ENCODE measurements at regions of chr17 and their contacts with region 1.

Region 1: GRCh38 chr17:65988081-65988850 is 203.7 kb downstream of the CEP112 start:
- DNase-seq: peak in 1 of 9 donors; percentile 5
- ATAC-seq: no peak
- H3K4me3 ChIP-seq: no peak overlapping the region
- H3K4me3 Mint-ChIP-seq: no peak overlapping the region
- H3K27ac ChIP-seq: no peak overlapping the region
- H3K27ac Mint-ChIP-seq: no peak overlapping the region
- H3K4me1 ChIP-seq: no peaks in the 10 kb centered on the region
- H3K4me1 Mint-ChIP-seq: no peaks in the 10 kb centered on the region
- H3K27me3 ChIP-seq: no peaks in the 10 kb centered on the region
- H3K27me3 Mint-ChIP-seq: peaks cover 0 to 16% (median 0%) of the 10 kb centered on the region in 5 donors

Region 2: GRCh38 chr17:65294179-65294720 is 694.0 kb before region 1 on chr17:
- CTCF ChIA-PET with region 1: no interaction called
- POLR2A ChIA-PET with region 1: no interaction called
- intact Hi-C with region 1: loop called in 1 of 2 experiments (anchors 5 kb)
- DNase-seq: peak; percentile 15 to 70 (median 60)
- ATAC-seq: peak; percentile 86
- H3K4me3 ChIP-seq: no peak overlapping the region
- H3K4me3 Mint-ChIP-seq: no peak overlapping the region
- H3K27ac ChIP-seq: no peak overlapping the region
- H3K27ac Mint-ChIP-seq: peak overlapping the region in 1 of 9 donors; percentile 80
- H3K4me1 ChIP-seq: no peaks in the 10 kb centered on the region
- H3K4me1 Mint-ChIP-seq: peaks cover 0 to 5% (median 5%) of the 10 kb centered on the region in 7 donors
- H3K27me3 ChIP-seq: no peaks in the 10 kb centered on the region
- H3K27me3 Mint-ChIP-seq: peaks cover 0 to 18% (median 0%) of the 10 kb centered on the region in 5 donors

Region 3: DNA sequence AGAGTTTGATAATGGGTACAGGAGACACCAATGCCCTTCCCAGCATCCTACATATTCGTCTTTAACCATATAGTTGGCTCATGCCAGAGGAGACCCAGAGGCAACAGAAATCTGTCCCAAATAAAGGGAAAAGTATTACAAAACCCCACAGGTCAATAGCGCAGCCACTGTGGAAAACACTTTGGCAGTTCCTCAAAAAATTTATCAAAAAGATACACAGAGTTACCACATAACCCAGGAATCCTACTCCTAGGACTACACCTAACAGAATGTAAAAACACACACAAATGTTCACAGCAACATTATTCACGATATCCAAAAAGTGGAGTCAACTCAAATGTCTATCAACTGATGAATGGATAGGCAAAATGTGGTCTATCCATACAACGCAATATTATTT is 67.9 kb after region 1 on chr17:
- CTCF ChIA-PET with region 1: no interaction called
- POLR2A ChIA-PET with region 1: no interaction called
- intact Hi-C with region 1: no loop called
- DNase-seq: no peak
- ATAC-seq: no peak
- H3K4me3 ChIP-seq: no peak overlapping the region
- H3K4me3 Mint-ChIP-seq: no peak overlapping the region
- H3K27ac ChIP-seq: no peak overlapping the region
- H3K27ac Mint-ChIP-seq: no peak overlapping the region
- H3K4me1 ChIP-seq: no peaks in the 10 kb centered on the region
- H3K4me1 Mint-ChIP-seq: no peaks in the 10 kb centered on the region
- H3K27me3 ChIP-seq: no peaks in the 10 kb centered on the region
- H3K27me3 Mint-ChIP-seq: no peaks in the 10 kb centered on the region